Psoas muscle (tissue), 8 donors: ENCODE measurements at regions of chr9 and their contacts with region 1.

Region 1: GRCh38 chr9:12775679-12776512 is 1.1 kb downstream of the LURAP1L start:
- DNase-seq: peak; percentile 38 to 63
- ATAC-seq: peak; percentile 44 to 92 (median 70)
- H3K4me3 ChIP-seq: peak overlapping the region; percentile 82
- H3K27ac ChIP-seq: peak overlapping the region; percentile 65
- H3K4me1 ChIP-seq: peaks cover 4% of the 10 kb centered on the region
- H3K27me3 ChIP-seq: no peaks in the 10 kb centered on the region
- CTCF ChIP-seq: peak; percentile 37

Region 2: GRCh38 chr9:12464910-12465512 is 310.9 kb before region 1 on chr9:
- intact Hi-C with region 1: no loop called
- DNase-seq: no peak
- ATAC-seq: no peak
- H3K4me3 ChIP-seq: no peak overlapping the region
- H3K27ac ChIP-seq: no peak overlapping the region
- H3K4me1 ChIP-seq: no peaks in the 10 kb centered on the region
- H3K27me3 ChIP-seq: no peaks in the 10 kb centered on the region
- CTCF ChIP-seq: peak; percentile 49

Region 3: DNA sequence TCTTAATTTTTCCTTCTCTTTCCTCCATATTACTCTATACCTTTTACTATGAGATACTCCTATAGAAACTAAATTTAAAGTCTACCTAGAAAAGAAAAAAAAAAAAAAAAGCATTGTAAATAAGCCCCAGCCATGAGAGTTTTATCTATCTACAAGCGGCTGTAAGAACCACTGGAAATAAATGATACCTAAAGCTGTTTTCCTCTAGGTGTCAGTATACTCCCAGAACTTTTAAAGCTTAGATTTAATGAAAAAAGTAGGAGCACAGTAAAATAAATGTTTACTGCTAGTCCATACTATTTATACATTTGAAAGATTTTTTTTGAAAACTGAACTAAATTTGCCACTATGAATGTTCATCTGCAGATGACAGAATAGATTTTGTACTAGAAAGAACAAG is 56.5 kb before region 1 on chr9:
- intact Hi-C with region 1: loop called in 1 of 2 experiments (anchors 5 kb)
- DNase-seq: no peak
- ATAC-seq: peak in 3 of 4 donors; percentile 25 to 61 (median 43)
- H3K4me3 ChIP-seq: no peak overlapping the region
- H3K27ac ChIP-seq: no peak overlapping the region
- H3K4me1 ChIP-seq: no peaks in the 10 kb centered on the region
- H3K27me3 ChIP-seq: no peaks in the 10 kb centered on the region
- CTCF ChIP-seq: peak; percentile 48

Region 4: GRCh38 chr9:12740845-12741244 is 35.1 kb before region 1 on chr9:
- intact Hi-C with region 1: loop called in 1 of 2 experiments (anchors 5 kb)
- DNase-seq: no peak
- ATAC-seq: no peak
- H3K4me3 ChIP-seq: no peak overlapping the region
- H3K27ac ChIP-seq: no peak overlapping the region
- H3K4me1 ChIP-seq: no peaks in the 10 kb centered on the region
- H3K27me3 ChIP-seq: no peaks in the 10 kb centered on the region
- CTCF ChIP-seq: no peak

Region 5: DNA sequence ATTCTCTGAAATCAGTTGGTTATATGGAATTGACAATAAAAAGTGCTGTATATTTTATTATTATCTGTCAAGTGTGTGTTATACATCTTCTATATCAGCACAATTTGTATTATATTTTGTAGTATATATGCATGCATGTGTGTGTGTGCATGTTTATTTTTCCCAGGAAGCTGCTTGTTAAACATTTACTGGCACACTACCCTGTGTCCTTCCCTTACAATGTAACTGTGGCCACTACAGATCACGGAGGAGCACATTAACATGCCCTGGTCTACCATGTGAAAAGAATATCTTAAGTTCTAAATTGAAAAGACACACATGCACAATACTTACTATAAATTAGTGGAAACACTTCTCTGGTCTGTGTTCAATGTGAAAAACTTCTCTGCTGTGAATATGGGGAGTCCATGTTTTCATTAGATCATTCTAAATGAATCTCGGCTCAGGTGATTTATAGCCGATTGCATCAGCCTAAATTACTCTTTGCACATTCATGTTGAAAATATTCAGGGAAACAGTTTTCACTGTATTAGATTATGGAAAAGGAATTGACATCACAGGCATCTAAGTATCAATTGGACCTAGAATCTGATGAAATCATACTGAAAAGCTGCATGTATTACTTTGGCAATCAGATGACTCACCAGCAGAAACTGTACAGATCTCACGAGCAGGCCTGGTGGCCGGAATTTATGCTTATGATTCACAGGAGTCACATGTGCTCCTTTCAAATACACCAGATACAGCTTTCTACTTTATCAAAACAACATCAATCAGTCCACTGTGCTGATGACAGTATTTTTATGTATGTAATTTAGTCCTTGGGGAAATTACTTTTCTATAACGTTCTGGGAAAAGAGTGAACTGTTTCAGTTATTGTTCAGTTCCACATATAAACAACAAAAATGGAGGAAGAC is 38.3 kb after region 1 on chr9:
- intact Hi-C with region 1: loop called in 1 of 2 experiments (anchors 5 kb)
- DNase-seq: peak in 1 of 2 donors; percentile 42
- ATAC-seq: peak; percentile 84 to 95 (median 93)
- H3K4me3 ChIP-seq: peak overlapping the region; percentile 51
- H3K27ac ChIP-seq: peak overlapping the region; percentile 62
- H3K4me1 ChIP-seq: peaks cover 21% of the 10 kb centered on the region
- H3K27me3 ChIP-seq: no peaks in the 10 kb centered on the region
- CTCF ChIP-seq: peak; percentile 45

Region 6: GRCh38 chr9:12878356-12878978 is 102.6 kb after region 1 on chr9:
- intact Hi-C with region 1: loop called in 1 of 2 experiments (anchors 5 kb)
- DNase-seq: no peak
- ATAC-seq: no peak
- H3K4me3 ChIP-seq: no peak overlapping the region
- H3K27ac ChIP-seq: no peak overlapping the region
- H3K4me1 ChIP-seq: no peaks in the 10 kb centered on the region
- H3K27me3 ChIP-seq: no peaks in the 10 kb centered on the region
- CTCF ChIP-seq: no peak

Region 7: DNA sequence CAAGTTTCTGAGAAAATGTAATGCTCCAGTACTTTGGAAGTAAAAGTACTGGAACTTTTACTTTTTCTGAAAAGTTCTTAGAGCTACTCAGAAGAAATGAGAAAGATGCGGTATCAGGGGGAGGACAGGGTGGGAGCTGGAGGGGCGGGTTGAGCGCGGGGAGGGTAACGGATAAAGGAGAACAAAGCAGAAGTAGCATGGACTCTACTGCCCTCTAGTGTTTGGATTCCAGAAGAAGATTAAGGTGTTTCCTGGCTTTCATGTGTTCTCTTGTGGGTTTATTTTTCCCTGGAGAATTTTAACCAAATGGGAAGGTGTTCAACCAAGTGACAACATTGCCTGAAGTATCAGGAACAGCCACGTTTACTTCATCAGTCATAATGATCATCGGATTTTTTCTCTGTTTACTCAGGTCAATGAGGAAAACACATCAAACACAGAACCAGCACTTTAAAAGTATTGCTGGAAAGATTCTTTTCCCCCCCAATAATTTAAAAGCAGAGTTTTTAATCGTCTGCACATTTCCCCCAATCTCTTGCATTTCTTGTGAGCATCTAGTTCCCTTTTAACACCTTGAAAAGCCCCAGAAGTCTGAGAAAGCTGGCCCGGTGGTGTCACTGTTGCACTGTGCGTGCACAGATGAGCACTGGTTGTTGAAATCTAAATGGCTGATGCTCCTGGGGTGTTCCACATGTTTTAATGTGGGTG is 313.0 kb after region 1 on chr9:
- intact Hi-C with region 1: loop called in 1 of 2 experiments (anchors 5 kb)
- DNase-seq: no peak
- ATAC-seq: peak in 3 of 4 donors; percentile 45 to 74 (median 61)
- H3K4me3 ChIP-seq: no peak overlapping the region
- H3K27ac ChIP-seq: no peak overlapping the region
- H3K4me1 ChIP-seq: no peaks in the 10 kb centered on the region
- H3K27me3 ChIP-seq: no peaks in the 10 kb centered on the region
- CTCF ChIP-seq: peak; percentile 77